Breast epithelium (tissue), 4 donors: ENCODE measurements at regions of chr2 and their contacts with region 1.

Region 1: DNA sequence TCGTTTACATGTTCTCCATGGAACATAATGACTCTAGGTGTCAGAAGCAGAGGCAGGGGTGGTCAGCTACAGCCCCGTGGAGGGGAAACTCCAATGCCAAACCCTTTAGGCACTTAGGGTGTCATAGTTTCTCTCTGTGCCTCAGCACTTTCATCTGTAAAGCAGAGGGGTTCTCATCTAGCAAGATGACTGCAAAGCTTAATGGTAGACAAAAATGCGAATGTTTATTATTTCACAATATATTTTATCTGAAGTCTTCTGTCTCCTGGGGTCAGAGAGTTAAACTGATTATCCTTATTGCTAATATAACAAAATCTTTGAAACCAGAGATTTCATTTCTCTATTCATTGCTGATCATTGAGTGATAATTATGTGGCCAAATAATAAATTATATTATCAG is 522.5 kb downstream of the TSN start:
- DNase-seq: no peak
- H3K4me3 ChIP-seq: no peak overlapping the region
- H3K27ac ChIP-seq: no peak overlapping the region
- H3K4me1 ChIP-seq: no peaks in the 10 kb centered on the region
- H3K27me3 ChIP-seq: no peaks in the 10 kb centered on the region
- CTCF ChIP-seq: no peak
- POLR2A ChIP-seq: no peak

Region 2: DNA sequence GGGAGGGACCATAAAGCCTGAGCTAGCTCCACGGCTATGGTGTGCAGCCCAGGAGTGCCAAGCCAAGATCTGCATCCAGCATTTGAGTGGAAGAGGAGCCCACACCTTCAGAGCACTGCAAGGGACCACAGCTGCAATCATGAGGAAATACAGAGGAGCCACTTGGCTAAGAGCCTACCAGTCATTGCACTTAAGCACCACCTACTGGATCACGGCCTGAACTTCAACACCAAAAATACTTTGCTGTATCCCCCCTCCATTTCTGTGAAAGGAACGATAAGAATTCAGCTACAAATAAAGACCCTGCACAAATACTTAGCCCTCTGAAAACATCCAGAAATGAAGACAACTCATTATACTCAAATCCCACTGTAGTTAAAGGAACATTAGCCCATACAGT is 22.8 kb after region 1 on chr2:
- intact Hi-C with region 1: no loop called
- DNase-seq: no peak
- H3K4me3 ChIP-seq: no peak overlapping the region
- H3K27ac ChIP-seq: no peak overlapping the region
- H3K4me1 ChIP-seq: no peaks in the 10 kb centered on the region
- H3K27me3 ChIP-seq: no peaks in the 10 kb centered on the region
- CTCF ChIP-seq: no peak
- POLR2A ChIP-seq: no peak

Region 3: GRCh38 chr2:122816803-122817202 is 538.8 kb after region 1 on chr2:
- intact Hi-C with region 1: loop called (anchors 5 kb)
- DNase-seq: no peak
- H3K4me3 ChIP-seq: no peak overlapping the region
- H3K27ac ChIP-seq: no peak overlapping the region
- H3K4me1 ChIP-seq: no peaks in the 10 kb centered on the region
- H3K27me3 ChIP-seq: no peaks in the 10 kb centered on the region
- CTCF ChIP-seq: no peak
- POLR2A ChIP-seq: no peak